AG04449 (cell line): ENCODE measurements at regions of chr11 and their contacts with region 1.

Region 1: DNA sequence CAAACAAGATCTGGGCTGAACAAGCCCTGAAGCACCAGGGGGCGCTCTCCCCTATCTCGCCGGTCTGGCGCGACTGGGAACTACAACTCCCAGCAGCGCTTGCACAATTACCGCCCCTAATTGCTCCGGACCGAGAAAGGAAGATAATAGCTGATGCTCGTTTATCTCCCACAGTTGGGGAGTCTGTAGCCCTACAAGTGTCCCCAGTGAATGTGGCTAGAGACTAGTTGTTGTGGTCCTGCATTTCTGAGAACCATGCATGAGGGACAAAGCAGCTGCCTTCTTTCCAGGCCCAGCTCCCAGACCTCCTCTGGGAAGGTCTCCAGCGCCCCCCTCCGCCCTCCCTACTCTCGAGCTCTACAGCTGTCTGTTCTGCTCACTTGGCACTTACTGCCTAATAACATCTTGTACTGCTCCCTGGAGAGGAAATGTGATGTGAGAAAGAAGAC is 34.4 kb downstream of the NRXN2 start:
- DNase-seq: no peak
- H3K4me3 ChIP-seq: peak overlapping the region; percentile 60
- CTCF ChIP-seq: peak; percentile 96

Region 2: DNA sequence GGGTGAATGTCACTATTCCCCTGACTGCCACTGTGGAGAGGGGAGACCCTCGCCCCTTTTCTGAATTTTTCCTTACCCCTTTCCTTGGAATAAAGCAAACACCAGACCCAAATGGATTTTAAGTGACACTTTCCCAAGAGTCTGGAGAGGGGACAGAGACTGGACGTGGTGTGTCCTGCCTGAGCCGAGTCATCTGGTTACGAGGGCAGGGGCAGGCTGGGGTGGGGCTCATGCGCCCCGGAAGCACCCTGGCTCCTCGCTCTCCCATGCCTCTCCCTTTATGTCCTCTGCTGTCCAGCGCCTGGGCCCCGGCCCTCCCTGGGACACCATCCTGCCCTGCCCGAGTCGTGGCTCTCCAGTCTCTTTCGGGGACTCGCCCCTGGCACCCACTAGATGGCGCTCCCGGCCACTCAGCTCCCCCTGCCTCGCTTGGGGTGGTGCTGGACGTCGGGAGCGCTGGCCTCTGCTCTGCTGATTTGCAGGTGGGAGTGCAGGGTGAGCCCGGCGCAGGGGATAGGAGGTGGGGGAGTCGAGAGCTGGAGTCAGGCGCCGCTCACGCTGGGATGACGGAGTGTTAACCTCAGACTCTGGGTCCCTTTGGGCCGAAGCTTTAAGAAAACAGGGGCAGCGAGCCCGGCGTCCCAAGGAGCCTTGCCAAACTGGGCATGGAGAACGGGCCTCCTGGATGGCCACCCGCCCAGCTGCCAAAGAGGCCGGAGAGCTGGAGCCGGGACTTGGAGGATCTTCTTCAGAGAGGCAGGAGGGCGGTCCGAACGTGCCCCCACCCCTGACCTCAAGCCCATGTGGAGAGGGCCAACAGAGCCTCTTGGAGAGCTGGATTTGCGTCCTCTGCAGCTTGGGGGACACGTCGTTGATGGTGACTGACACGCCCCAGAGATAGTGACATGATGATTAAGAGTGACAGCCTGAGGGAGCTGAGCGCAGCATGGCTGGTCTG is 239.7 kb before region 1 on chr11:
- CTCF ChIA-PET with region 1: interaction called, 24 read pairs
- POLR2A ChIA-PET with region 1: no interaction called
- DNase-seq: no peak
- H3K4me3 ChIP-seq: peak overlapping the region; percentile 36
- CTCF ChIP-seq: peak; percentile 97

Region 3: GRCh38 chr11:64643256-64643881 is 45.2 kb before region 1 on chr11:
- CTCF ChIA-PET with region 1: no interaction called
- POLR2A ChIA-PET with region 1: no interaction called
- DNase-seq: no peak
- H3K4me3 ChIP-seq: no peak overlapping the region
- CTCF ChIP-seq: no peak

Region 4: GRCh38 chr11:64659417-64660144 is 29.0 kb before region 1 on chr11:
- CTCF ChIA-PET with region 1: interaction called, 56 read pairs
- POLR2A ChIA-PET with region 1: interaction called, 4 read pairs
- DNase-seq: peak; percentile 78
- H3K4me3 ChIP-seq: no peak overlapping the region
- CTCF ChIP-seq: peak; percentile 15

Region 5: DNA sequence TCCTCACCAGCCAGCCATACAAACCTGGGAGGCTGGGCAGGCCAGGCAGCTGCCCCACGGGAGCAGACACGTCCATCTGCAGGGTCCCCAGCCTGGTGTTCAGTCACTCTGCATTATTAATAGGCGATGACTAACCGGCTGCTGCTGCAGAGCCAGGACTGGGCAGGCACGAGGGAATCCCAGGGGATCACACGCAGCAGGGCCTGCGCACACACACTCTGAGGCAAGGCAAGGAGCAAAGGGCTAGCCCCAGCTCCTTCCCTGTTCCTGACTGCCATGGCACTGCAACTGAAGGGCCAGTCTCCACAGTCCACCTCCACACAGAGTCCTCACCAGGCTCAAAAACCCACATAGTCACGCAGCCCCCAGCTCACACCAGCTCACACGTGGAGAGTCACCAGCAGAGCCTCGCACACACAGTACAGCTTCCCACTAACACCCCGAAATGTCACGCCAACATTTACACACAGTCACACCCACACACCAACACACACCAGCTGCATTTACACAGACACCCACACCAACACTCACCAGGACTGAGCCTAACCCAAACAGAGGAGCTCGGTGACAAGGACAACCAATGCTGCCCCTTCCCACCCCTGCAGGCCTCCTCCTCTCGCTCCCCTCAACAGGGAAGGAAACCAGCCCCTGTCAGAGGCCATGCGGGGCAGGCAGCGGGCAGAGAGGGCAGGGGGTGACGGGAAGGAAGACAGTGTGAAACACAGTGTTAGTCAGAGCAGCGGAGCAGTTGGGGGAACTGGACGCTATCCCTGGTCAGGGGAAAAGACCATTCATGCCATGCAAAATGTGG is 12.9 kb before region 1 on chr11:
- CTCF ChIA-PET with region 1: interaction called, 56 read pairs
- POLR2A ChIA-PET with region 1: no interaction called
- DNase-seq: peak; percentile 47
- H3K4me3 ChIP-seq: no peak overlapping the region
- CTCF ChIP-seq: no peak

Region 6: GRCh38 chr11:64716473-64717267 is 28.1 kb after region 1 on chr11:
- CTCF ChIA-PET with region 1: interaction called, 23 read pairs
- POLR2A ChIA-PET with region 1: no interaction called
- DNase-seq: no peak
- H3K4me3 ChIP-seq: no peak overlapping the region
- CTCF ChIP-seq: no peak

Region 7: GRCh38 chr11:64734811-64735724 is 46.5 kb after region 1 on chr11:
- CTCF ChIA-PET with region 1: interaction called, 12 read pairs
- POLR2A ChIA-PET with region 1: no interaction called
- DNase-seq: no peak
- H3K4me3 ChIP-seq: no peak overlapping the region
- CTCF ChIP-seq: no peak